Posterior vena cava (tissue), 2 donors: ENCODE measurements at regions of chr5 and their contacts with region 1.

Region 1: GRCh38 chr5:133868946-133869518 is 99.4 kb downstream of the C5orf15 start:
- DNase-seq: peak; percentile 93

Region 2: GRCh38 chr5:133111299-133111698 is 757.7 kb before region 1 on chr5:
- intact Hi-C with region 1: loop called in 1 of 2 experiments (anchors 5 kb)
- DNase-seq: peak; percentile 96

Region 3: GRCh38 chr5:133440467-133441115 is 428.4 kb before region 1 on chr5:
- intact Hi-C with region 1: loop called in 1 of 2 experiments (anchors 10 kb)
- DNase-seq: no peak

Region 4: GRCh38 chr5:133801955-133802751 is 66.9 kb before region 1 on chr5:
- intact Hi-C with region 1: loop called in 1 of 2 experiments (anchors 5 kb)
- DNase-seq: peak; percentile 92